Upper lobe of right lung (tissue), 1 donor: ENCODE measurements at regions of chr9 and their contacts with region 1.

Region 1: GRCh38 chr9:27489087-27489876 is 34.8 kb upstream of the IFNK start:
- DNase-seq: no peak
- ATAC-seq: no peak
- H3K4me3 ChIP-seq: no peak overlapping the region
- H3K27ac ChIP-seq: no peak overlapping the region
- H3K4me1 ChIP-seq: no peaks in the 10 kb centered on the region
- H3K27me3 ChIP-seq: no peaks in the 10 kb centered on the region
- CTCF ChIP-seq: no peak

Region 2: DNA sequence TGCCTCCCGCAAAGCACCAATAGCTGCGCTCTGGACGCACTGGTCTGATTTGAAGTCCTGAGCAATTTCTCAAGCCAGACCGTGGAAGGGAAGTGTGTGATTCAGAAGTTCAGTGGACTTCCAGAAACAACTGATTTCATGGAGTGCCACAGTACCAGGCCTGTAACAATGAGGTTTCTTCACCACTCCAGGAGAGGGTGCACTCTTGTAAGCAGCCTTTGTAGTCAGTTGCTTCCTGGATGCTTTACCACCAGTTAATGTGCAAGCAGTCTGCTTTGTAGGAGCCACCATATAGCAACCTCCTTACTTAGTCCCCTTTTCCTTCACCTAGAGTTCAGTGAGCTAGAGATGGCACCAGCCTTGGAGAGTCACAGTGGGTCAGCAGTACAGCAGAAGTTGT is 609.0 kb before region 1 on chr9:
- intact Hi-C with region 1: no loop called
- DNase-seq: no peak
- ATAC-seq: no peak
- H3K4me3 ChIP-seq: no peak overlapping the region
- H3K27ac ChIP-seq: no peak overlapping the region
- H3K4me1 ChIP-seq: no peaks in the 10 kb centered on the region
- H3K27me3 ChIP-seq: no peaks in the 10 kb centered on the region
- CTCF ChIP-seq: no peak

Region 3: GRCh38 chr9:27385606-27386322 is 103.5 kb before region 1 on chr9:
- intact Hi-C with region 1: no loop called
- DNase-seq: peak; percentile 69
- ATAC-seq: peak; percentile 70
- H3K4me3 ChIP-seq: no peak overlapping the region
- H3K27ac ChIP-seq: no peak overlapping the region
- H3K4me1 ChIP-seq: peaks cover 17% of the 10 kb centered on the region
- H3K27me3 ChIP-seq: no peaks in the 10 kb centered on the region
- CTCF ChIP-seq: no peak

Region 4: DNA sequence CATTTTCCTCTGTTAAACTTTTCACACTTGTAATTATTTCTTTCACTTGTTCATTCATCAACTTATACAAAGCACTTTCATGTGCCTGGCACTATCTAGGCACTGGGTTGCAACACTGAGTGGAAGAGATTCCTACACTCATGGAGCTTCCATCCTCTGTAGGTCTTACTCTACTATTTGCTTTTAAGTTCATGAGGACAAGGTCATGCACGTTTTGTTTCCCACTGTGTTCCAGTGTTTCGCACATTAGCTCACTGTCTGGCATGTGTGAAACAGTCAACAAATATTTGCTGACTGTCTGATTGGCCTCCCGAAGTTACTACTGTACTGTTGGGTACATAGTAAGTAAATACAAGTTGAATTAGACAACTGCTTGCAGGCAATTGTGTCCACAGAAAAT is 53.0 kb before region 1 on chr9:
- intact Hi-C with region 1: loop called (anchors 10 kb)
- DNase-seq: no peak
- ATAC-seq: peak; percentile 73
- H3K4me3 ChIP-seq: no peak overlapping the region
- H3K27ac ChIP-seq: no peak overlapping the region
- H3K4me1 ChIP-seq: peaks cover 27% of the 10 kb centered on the region
- H3K27me3 ChIP-seq: no peaks in the 10 kb centered on the region
- CTCF ChIP-seq: no peak

Region 5: DNA sequence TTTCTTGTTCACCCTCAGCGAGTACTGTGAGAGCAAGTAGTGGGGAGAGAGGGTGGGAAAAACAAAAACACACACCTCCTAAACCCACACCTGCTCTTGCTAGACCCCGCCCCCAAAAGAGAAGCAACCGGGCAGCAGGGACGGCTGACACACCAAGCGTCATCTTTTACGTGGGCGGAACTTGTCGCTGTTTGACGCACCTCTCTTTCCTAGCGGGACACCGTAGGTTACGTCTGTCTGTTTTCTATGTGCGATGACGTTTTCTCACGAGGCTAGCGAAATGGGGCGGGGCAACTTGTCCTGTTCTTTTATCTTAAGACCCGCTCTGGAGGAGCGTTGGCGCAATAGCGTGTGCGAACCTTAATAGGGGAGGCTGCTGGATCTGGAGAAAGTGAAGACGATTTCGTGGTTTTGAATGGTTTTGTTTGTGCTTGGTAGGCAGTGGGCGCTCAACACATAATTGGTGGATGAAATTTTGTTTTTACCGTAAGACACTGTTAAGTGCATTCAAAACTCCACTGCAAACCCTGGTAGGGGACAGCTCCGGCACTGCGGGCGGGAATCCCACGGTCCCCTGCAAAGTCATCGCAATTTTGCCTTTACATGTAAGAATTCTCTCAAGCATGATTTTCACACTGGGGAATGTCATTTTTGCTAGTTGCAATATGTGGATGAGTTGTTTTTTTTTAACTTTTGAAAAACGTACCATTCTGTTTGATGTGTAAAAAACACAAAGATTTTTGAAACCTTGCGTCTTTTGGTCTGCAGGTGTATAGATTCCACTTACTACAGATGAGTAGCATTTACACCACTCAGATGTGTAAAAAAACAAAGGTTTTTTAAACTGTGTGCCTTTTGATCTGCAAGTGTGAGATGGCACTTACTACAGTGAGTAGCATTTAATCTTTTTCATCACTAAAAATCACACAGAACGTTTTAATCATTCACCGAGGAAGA is 84.6 kb after region 1 on chr9:
- intact Hi-C with region 1: no loop called
- DNase-seq: peak; percentile 95
- ATAC-seq: peak; percentile 90
- H3K4me3 ChIP-seq: peak overlapping the region; percentile 86
- H3K27ac ChIP-seq: peak overlapping the region; percentile 99
- H3K4me1 ChIP-seq: peaks cover 15% of the 10 kb centered on the region
- H3K27me3 ChIP-seq: no peaks in the 10 kb centered on the region
- CTCF ChIP-seq: no peak